IMR-90 (cell line): ENCODE measurements at regions of chr10 and their contacts with region 1.

Region 1: DNA sequence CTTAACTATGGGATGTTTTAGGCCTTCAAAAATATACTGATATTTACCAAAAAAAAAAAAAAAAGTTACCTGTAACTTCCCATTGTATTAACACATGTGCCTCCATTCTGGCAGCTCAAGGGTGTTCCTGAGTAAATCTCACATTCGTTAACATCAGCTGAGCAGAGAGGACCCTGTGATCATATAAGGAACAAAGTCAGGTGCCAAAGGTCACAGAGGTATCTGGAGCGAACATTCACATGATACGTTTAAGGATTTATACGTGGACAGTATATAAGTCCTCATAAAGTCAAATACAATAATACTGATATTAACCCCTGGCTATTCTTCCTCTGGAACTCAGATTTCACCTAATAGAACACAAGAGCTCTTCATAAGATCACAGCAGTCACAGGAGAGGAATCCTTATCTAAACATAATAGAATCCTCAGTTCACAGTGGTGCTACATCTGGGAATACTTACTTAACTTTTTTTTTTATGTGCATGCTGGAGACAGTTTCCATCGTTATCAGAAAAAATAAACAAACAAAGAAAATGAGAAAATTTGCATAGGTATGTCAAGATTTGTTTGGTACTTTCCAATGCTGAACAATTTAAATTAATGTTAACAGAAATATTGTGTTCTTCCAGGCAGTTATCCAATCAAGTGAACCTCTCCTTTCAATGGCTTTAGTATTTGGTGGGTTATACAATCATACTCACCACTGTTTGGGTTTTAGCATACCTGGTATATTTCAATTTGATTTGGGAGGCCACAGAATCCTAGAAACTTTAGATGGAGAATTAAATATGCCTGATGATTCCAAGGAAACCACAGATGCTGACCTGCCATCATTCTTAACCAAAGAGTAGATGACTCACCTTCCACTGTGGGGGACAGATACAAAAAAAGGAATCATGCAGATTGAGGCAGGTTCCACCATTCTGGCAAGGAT is 6.6 kb downstream of the CUBN start:
- DNase-seq: peak; percentile 86
- ATAC-seq: peak; percentile 89
- H3K4me3 ChIP-seq: no peak overlapping the region
- H3K27ac ChIP-seq: no peak overlapping the region
- H3K4me1 ChIP-seq: peaks cover 6% of the 10 kb centered on the region
- H3K27me3 ChIP-seq: no peaks in the 10 kb centered on the region
- CTCF ChIP-seq: no peak
- POLR2A ChIP-seq: no peak
- RAD21 ChIP-seq: 0 out of 2 replicates have a peak, but pooled peaks have one; percentile 15

Region 2: DNA sequence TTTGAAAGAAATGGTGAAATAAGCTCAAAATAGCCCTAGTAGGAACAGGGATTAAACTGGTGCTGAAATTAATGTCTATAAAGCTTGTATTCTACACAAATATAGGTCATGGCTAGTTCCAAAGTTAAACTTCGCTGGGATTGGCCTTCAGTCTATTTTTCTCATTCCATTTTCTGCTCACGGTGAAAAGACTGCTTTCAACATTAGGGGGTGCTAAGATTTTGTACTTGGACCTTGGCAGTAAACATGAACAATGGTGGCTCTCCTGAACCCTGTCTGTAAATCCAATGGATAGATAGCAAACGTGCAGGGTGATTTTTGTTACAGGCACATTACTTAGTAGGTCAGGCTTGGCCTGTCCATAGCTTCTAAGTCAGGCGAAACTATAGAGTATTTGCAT is 269.8 kb before region 1 on chr10:
- CTCF ChIA-PET with region 1: no interaction called
- POLR2A ChIA-PET with region 1: no interaction called
- dilution Hi-C with region 1: no loop called
- in situ Hi-C with region 1: no loop called
- intact Hi-C with region 1: loop called (anchors 5 kb)
- DNase-seq: peak; percentile 68
- ATAC-seq: peak; percentile 80
- H3K4me3 ChIP-seq: no peak overlapping the region
- H3K27ac ChIP-seq: no peak overlapping the region
- H3K4me1 ChIP-seq: peaks cover 3% of the 10 kb centered on the region
- H3K27me3 ChIP-seq: no peaks in the 10 kb centered on the region
- CTCF ChIP-seq: peak; percentile 76
- POLR2A ChIP-seq: no peak
- RAD21 ChIP-seq: peak; percentile 82

Region 3: DNA sequence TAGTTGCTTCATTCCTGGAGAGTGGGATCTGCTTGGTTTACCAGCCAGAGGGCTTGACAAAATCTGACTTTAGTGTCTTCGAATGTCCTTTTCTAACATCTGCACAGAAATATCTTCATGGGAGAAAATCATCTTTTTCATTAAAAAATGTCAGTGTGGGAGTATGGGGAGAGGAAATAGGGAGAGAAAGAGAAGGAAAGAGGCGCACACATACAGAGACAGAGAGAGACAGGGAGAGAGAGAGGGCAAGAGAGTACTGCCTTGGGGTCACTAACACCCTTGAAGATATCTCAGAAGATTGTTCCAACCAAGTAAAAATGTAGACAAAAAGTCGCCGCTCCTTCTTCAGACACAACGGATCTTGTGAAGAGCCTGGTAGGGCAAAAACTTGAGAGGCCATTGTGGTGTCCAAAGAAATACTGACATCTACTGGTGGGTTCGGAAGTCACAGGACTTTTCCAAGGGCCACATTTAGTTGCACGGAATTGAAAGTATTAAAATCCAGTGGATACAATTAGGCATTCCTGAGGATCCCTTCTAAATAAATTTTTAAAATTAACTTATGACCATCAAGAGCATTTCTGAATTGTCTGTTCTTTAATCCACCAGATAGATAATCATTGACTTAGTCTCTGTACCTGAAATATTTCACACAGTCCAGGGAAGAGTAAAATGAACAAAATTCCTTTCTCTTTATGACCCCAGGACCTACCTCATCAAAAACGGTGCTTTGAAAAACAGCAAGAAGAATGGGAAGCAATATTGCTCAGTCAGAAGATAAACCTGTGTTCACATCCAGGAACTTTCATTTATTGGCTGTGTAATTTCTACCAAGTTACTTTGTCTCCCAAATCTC is 134.7 kb after region 1 on chr10:
- CTCF ChIA-PET with region 1: no interaction called
- POLR2A ChIA-PET with region 1: no interaction called
- dilution Hi-C with region 1: no loop called
- in situ Hi-C with region 1: no loop called
- intact Hi-C with region 1: no loop called
- DNase-seq: peak; percentile 78
- ATAC-seq: peak; percentile 98
- H3K4me3 ChIP-seq: peak overlapping the region; percentile 37; the same call in 1 of the 2 replicates
- H3K27ac ChIP-seq: peak overlapping the region; percentile 18; the same call in 1 of the 2 replicates
- H3K4me1 ChIP-seq: no peaks in the 10 kb centered on the region
- H3K27me3 ChIP-seq: no peaks in the 10 kb centered on the region
- CTCF ChIP-seq: peak; percentile 94
- POLR2A ChIP-seq: no peak
- RAD21 ChIP-seq: peak; percentile 97